ENCODE measurements at regions of chr1 and their contacts with region 1.

Region 1: DNA sequence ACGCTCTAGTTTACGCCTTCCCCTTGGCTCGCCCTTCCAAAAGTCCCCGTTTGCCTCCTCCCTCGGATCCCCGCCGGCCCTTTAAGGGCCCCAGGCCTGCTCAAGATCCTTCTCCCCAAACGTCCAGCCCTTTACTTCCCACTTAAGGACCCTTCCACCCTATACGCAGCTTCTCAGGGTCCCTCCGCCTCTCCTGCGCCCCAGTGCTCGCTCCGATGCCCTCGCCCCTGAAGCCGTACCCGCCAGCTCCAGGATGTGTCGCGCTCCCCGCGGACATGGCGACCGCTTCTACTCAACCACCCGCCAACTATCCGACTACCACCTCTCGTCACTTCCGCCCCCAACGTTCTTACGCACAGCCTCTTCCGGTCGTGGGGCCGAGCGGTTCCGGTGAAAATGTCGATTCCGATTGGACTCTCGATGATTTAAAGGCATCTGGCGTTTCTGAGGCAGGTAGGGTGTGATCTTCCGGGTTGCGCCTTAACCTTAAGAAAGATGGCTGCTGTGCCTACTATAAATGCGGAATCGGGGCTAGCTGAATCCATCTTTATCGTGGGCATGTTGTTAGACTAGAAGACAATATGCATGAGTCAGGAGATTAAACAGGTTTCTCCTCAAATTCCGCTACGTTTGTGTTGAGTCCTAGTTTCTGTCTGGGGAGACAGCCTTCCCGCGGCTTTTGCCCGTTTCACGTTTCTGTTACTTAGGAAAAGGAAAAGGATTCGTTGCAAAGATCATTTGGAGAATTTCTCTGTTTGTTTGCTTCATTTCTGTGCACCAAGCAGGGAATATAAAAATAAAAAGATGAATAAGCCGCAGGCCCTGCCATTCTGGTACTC is at the start of gene KHDC4:
- DNase-seq: peak; percentile 97
- H3K4me3 ChIP-seq: peak within 1 kb of the TSS; percentile 80 to 89 (median 83)
- H3K27ac ChIP-seq: peak within 1 kb of the TSS; percentile 91 to 96 (median 94)
- H3K4me1 ChIP-seq: peaks cover 30 to 60% (median 42%) of the 10 kb centered on the region in 4 donors
- H3K27me3 ChIP-seq: no peaks in the 10 kb centered on the region
- CTCF ChIP-seq: no peak
- EP300 ChIP-seq: no peak
- POLR2A ChIP-seq: peak; percentile 100
- total RNA-seq, gene KHDC4: 76.2 to 158 (median 98.7) TPM

Region 2: GRCh38 chr1:155983191-155984024 is 49.1 kb after region 1 on chr1:
- in situ Hi-C with region 1: loop called (anchors 5 to 10 kb)
- intact Hi-C with region 1: loop called (anchors 5 kb)
- DNase-seq: peak; percentile 45
- H3K4me3 ChIP-seq: peak overlapping the region in 1 of 4 donors; percentile 19
- H3K27ac ChIP-seq: peak overlapping the region; percentile 92 to 96 (median 94)
- H3K4me1 ChIP-seq: peaks cover 31 to 53% (median 35%) of the 10 kb centered on the region in 4 donors
- H3K27me3 ChIP-seq: no peaks in the 10 kb centered on the region
- CTCF ChIP-seq: no peak
- EP300 ChIP-seq: no peak
- POLR2A ChIP-seq: no peak

Region 3: DNA sequence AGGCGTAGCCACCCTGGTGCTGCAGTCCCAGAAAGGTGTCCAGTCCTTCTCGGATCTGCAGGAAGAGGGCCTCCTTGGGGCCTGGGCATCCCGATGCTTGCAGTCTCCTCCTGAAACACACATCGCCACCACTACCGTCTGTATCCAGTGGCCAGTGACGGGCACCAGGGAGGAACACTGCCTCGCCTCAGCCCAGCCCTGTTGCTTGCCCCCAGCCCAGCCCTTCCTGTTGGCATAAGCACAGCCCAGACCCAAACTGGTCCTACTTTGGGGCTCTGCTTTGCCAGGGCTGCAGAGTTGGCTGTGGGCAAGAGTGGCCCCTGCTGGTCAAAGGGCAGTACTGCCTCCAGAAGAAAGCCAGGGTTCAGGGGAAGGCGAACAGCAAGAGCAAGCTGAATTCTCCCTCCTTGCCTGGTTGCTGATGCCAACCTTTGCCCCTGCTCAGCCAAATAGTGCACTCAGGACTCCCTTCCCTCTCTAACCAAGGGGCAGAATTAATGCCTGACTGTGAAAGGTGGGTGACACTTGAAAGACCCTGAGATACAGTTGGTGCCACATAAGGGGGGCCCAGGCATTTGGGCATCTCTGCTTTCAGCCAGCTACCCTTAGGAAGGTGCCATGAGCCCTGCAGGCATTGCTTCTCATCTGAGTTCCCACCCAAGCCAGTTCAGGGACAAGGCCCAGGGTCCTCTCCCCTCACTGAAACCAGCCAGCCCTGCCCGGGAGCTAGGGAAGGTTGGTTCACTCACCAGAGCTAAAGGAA is 55.1 kb after region 1 on chr1:
- in situ Hi-C with region 1: loop called (anchors 5 to 10 kb)
- intact Hi-C with region 1: loop called (anchors 5 kb)
- DNase-seq: peak; percentile 75
- H3K4me3 ChIP-seq: peak overlapping the region in 3 of 4 donors; percentile 5 to 22 (median 13)
- H3K27ac ChIP-seq: peak overlapping the region; percentile 18 to 38 (median 32)
- H3K4me1 ChIP-seq: peaks cover 7 to 8% (median 7%) of the 10 kb centered on the region in 4 donors
- H3K27me3 ChIP-seq: no peaks in the 10 kb centered on the region
- CTCF ChIP-seq: peak; percentile 98 to 99 (median 99)
- EP300 ChIP-seq: no peak
- POLR2A ChIP-seq: no peak